PC-3 (cell line): ENCODE measurements at regions of chr16 and their contacts with region 1.

Region 1: DNA sequence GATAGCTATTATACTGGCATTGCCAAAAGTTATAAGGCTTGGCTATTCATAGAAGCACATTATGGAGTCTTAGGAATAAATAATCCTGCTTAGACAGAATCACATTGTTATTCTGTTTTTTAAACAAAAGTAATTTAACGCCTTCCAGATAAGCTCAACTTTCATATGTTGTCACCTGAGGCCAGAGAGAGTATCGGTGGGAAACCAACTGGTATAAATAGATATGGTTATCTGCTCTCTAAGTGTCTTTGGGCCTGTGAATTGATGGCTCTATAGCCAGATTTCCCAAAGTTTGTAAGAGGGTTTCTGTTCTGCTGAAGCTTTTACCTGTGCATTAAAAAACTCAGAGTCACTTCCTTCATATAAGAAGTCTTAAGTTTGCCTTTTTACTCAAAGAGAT is 1449.4 kb downstream of the CDH11 start:
- DNase-seq: no peak
- ATAC-seq: no peak
- H3K4me3 ChIP-seq: no peak overlapping the region
- H3K27ac ChIP-seq: no peak overlapping the region
- H3K4me1 ChIP-seq: no peaks in the 10 kb centered on the region
- H3K27me3 ChIP-seq: peaks cover 7% of the 10 kb centered on the region; the same call in 1 of the 2 replicates
- CTCF ChIP-seq: no peak

Region 2: DNA sequence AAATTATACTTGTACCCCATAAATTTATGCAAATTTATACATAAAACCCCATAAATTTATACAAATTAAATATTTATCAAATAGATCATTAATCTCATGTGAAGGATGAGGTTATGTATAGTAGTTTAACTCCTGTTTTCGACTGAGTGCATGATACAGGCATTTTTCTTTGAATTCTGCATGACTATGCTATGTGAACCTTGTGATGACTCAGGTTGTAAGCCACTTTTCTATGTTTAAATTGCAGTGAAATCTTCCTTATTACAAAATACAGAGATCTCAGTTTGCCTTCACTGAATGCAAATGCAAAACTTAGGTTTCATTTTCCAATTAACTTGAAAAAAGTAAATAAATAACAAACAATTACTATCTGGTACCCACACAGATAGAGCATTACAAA is 605.7 kb after region 1 on chr16:
- CTCF ChIA-PET with region 1: no interaction called
- POLR2A ChIA-PET with region 1: interaction called, 13 read pairs
- intact Hi-C with region 1: no loop called
- DNase-seq: peak; percentile 30
- ATAC-seq: peak; percentile 51
- H3K4me3 ChIP-seq: no peak overlapping the region
- H3K27ac ChIP-seq: no peak overlapping the region
- H3K4me1 ChIP-seq: no peaks in the 10 kb centered on the region
- H3K27me3 ChIP-seq: no peaks in the 10 kb centered on the region
- CTCF ChIP-seq: no peak